MCF 10A (cell line): ENCODE measurements at regions of chr5 and their contacts with region 1.

Region 1: GRCh38 chr5:145946112-145946861 is 9.9 kb downstream of the SH3RF2 start:
- DNase-seq: peak; percentile 72
- H3K4me3 Mint-ChIP-seq: no peak overlapping the region
- H3K27ac Mint-ChIP-seq: peak overlapping the region; percentile 32
- H3K4me1 Mint-ChIP-seq: peaks cover 61% of the 10 kb centered on the region
- H3K27me3 Mint-ChIP-seq: no peaks in the 10 kb centered on the region
- CTCF ChIP-seq: no peak

Region 2: GRCh38 chr5:144436007-144436406 is 1510.3 kb before region 1 on chr5:
- CTCF ChIA-PET with region 1: no interaction called
- POLR2A ChIA-PET with region 1: no interaction called
- intact Hi-C with region 1: no loop called
- DNase-seq: no peak
- H3K4me3 Mint-ChIP-seq: no peak overlapping the region
- H3K27ac Mint-ChIP-seq: no peak overlapping the region
- H3K4me1 Mint-ChIP-seq: no peaks in the 10 kb centered on the region
- H3K27me3 Mint-ChIP-seq: no peaks in the 10 kb centered on the region
- CTCF ChIP-seq: no peak

Region 3: GRCh38 chr5:145834917-145835847 is 111.1 kb before region 1 on chr5 and contains the start of gene PRELID2:
- CTCF ChIA-PET with region 1: interaction called, 3 read pairs
- POLR2A ChIA-PET with region 1: interaction called, 10 read pairs
- intact Hi-C with region 1: no loop called
- DNase-seq: peak; percentile 94
- H3K4me3 Mint-ChIP-seq: peak within 1 kb of the TSS; percentile 73
- H3K27ac Mint-ChIP-seq: no peak within 1 kb of the TSS
- H3K4me1 Mint-ChIP-seq: peaks cover 35% of the 10 kb centered on the region
- H3K27me3 Mint-ChIP-seq: no peaks in the 10 kb centered on the region
- CTCF ChIP-seq: no peak
- total RNA-seq, gene PRELID2: 11.4 and 11.7 TPM in 2 replicates

Region 4: GRCh38 chr5:145925353-145925752 is 20.9 kb before region 1 on chr5:
- CTCF ChIA-PET with region 1: interaction called, 3 read pairs
- POLR2A ChIA-PET with region 1: interaction called, 268 read pairs
- intact Hi-C with region 1: no loop called
- DNase-seq: peak; percentile 80
- H3K4me3 Mint-ChIP-seq: no peak overlapping the region
- H3K27ac Mint-ChIP-seq: peak overlapping the region; percentile 84
- H3K4me1 Mint-ChIP-seq: peaks cover 37% of the 10 kb centered on the region
- H3K27me3 Mint-ChIP-seq: no peaks in the 10 kb centered on the region
- CTCF ChIP-seq: no peak

Region 5: GRCh38 chr5:145975361-145976066 is 29.2 kb after region 1 on chr5:
- CTCF ChIA-PET with region 1: interaction called, 10 read pairs
- POLR2A ChIA-PET with region 1: interaction called, 25 read pairs
- intact Hi-C with region 1: no loop called
- DNase-seq: peak; percentile 97
- H3K4me3 Mint-ChIP-seq: no peak overlapping the region
- H3K27ac Mint-ChIP-seq: peak overlapping the region; percentile 89
- H3K4me1 Mint-ChIP-seq: peaks cover 59% of the 10 kb centered on the region
- H3K27me3 Mint-ChIP-seq: no peaks in the 10 kb centered on the region
- CTCF ChIP-seq: no peak

Region 6: DNA sequence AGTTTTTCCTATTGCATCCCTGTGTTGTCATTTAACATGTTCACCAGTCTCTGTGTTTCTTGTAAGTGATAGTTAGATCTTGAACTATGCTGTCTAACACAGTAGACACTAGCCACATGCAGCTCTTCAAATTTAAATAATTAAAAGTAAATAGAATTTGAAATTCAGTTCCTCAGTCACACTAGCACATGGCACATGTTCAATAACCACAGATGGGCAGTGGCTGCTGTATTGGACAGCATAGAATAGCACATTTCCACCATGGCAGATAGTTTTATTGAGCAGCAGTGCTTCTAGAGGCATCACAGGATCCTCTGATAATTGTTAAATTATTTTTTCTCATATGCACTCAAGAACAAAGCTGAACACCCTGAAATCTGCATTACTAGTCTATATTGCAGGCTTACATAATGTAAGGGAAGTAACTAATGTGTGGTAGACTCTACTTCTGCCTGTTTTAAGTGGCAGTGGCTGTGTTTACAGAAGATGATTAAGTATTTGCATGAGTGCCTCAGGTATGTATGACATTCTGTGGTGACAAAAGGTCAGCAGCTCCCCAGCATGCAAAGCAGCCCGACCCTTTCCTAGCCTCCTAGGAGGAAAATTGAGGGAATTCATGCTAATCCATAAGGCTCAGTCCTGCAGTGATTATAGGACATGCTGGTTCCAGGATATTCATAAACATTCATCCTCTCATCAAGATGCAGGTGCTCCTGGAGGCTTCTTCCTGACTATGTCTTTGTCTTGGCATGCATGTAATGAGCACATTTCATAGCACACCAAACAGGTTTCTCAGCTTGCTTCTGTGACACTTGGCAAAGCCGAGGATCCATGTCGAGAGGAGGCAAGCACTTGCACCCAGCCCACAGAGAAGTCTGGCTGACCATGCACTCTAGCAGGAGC is 35.6 kb after region 1 on chr5:
- CTCF ChIA-PET with region 1: interaction called, 10 read pairs
- POLR2A ChIA-PET with region 1: interaction called, 25 read pairs
- intact Hi-C with region 1: no loop called
- DNase-seq: no peak
- H3K4me3 Mint-ChIP-seq: no peak overlapping the region
- H3K27ac Mint-ChIP-seq: peak overlapping the region; percentile 26
- H3K4me1 Mint-ChIP-seq: peaks cover 10% of the 10 kb centered on the region
- H3K27me3 Mint-ChIP-seq: no peaks in the 10 kb centered on the region
- CTCF ChIP-seq: no peak

Region 7: GRCh38 chr5:146041180-146041789 is 95.0 kb after region 1 on chr5:
- CTCF ChIA-PET with region 1: interaction called, 29 read pairs
- POLR2A ChIA-PET with region 1: interaction called, 112 read pairs
- intact Hi-C with region 1: no loop called
- DNase-seq: peak; percentile 34
- H3K4me3 Mint-ChIP-seq: no peak overlapping the region
- H3K27ac Mint-ChIP-seq: peak overlapping the region; percentile 62
- H3K4me1 Mint-ChIP-seq: peaks cover 53% of the 10 kb centered on the region
- H3K27me3 Mint-ChIP-seq: no peaks in the 10 kb centered on the region
- CTCF ChIP-seq: no peak